CD4-positive, alpha-beta memory T cell (primary cell): ENCODE measurements at regions of chr12 and their contacts with region 1.

Region 1: GRCh38 chr12:26884765-26885576 is 52.0 kb upstream of the ITPR2 start:
- DNase-seq: peak; percentile 77 to 82 (median 82)
- H3K4me3 ChIP-seq: no peak overlapping the region
- H3K4me3 Mint-ChIP-seq: peak overlapping the region; percentile 40 to 80 (median 67)
- H3K27ac ChIP-seq: no peak overlapping the region
- H3K27ac Mint-ChIP-seq: peak overlapping the region in 3 of 7 donors; percentile 42 to 60 (median 53)
- H3K4me1 ChIP-seq: peaks cover 4% of the 10 kb centered on the region
- H3K4me1 Mint-ChIP-seq: peaks cover 5 to 8% (median 7%) of the 10 kb centered on the region in 4 donors
- H3K27me3 ChIP-seq: no peaks in the 10 kb centered on the region
- H3K27me3 Mint-ChIP-seq: peaks cover 2 to 3% of the 10 kb centered on the region in 2 donors

Region 2: GRCh38 chr12:26097046-26097878 is 787.7 kb before region 1 on chr12:
- CTCF ChIA-PET with region 1: interaction called, 3 read pairs
- POLR2A ChIA-PET with region 1: no interaction called
- intact Hi-C with region 1: loop called (anchors 1 kb)
- DNase-seq: peak; percentile 48 to 54 (median 49)
- H3K4me3 ChIP-seq: no peak overlapping the region
- H3K4me3 Mint-ChIP-seq: no peak overlapping the region
- H3K27ac ChIP-seq: no peak overlapping the region
- H3K27ac Mint-ChIP-seq: no peak overlapping the region
- H3K4me1 ChIP-seq: no peaks in the 10 kb centered on the region
- H3K4me1 Mint-ChIP-seq: peaks cover 0 to 1% (median 0%) of the 10 kb centered on the region in 4 donors
- H3K27me3 ChIP-seq: no peaks in the 10 kb centered on the region
- H3K27me3 Mint-ChIP-seq: peaks cover 7 to 9% of the 10 kb centered on the region in 2 donors

Region 3: DNA sequence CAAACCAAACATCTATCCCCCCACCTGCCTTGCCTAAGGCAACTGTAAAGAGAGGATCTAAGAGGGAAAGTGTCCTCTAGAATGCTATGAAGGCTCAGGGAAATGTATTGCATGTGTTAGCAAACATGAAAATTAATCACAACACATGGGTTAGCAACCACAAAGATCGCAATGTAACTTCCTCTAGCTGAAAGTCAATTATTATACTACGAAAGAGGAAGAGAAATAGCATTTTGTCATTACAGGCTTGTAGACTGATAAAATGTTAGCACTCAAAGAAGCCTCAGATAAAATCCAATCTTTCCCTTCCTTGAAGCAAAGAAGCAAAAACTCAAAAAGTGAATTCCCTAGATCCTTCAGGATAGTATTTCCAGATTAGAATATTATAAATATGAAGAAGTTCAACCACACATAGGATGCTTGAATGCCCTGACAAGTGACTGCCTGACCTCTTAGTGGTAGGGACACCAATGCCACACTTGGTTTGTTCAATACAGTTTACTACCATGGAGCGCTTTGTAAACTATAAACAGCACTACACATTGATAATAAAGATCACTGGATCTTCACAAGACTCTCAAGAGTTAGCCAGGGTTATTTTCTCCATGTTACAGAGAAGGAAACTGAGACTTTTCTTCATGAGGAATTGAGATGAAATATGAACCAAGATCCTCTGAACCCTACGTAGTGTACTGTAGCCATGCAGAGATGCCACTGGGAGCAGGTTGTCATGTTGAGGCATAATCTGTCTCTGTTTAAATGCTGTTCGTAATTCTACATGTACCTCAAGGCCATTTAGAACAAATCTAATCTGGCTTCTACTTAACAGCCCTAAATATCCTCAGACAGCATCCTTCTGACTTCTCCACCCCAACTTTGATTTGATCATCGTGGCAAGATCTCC is 152.7 kb before region 1 on chr12:
- CTCF ChIA-PET with region 1: no interaction called
- POLR2A ChIA-PET with region 1: no interaction called
- intact Hi-C with region 1: no loop called
- DNase-seq: no peak
- H3K4me3 ChIP-seq: no peak overlapping the region
- H3K4me3 Mint-ChIP-seq: no peak overlapping the region
- H3K27ac ChIP-seq: no peak overlapping the region
- H3K27ac Mint-ChIP-seq: no peak overlapping the region
- H3K4me1 ChIP-seq: peaks cover 10% of the 10 kb centered on the region
- H3K4me1 Mint-ChIP-seq: peaks cover 33 to 50% (median 41%) of the 10 kb centered on the region in 4 donors
- H3K27me3 ChIP-seq: no peaks in the 10 kb centered on the region
- H3K27me3 Mint-ChIP-seq: no peaks in the 10 kb centered on the region

Region 4: DNA sequence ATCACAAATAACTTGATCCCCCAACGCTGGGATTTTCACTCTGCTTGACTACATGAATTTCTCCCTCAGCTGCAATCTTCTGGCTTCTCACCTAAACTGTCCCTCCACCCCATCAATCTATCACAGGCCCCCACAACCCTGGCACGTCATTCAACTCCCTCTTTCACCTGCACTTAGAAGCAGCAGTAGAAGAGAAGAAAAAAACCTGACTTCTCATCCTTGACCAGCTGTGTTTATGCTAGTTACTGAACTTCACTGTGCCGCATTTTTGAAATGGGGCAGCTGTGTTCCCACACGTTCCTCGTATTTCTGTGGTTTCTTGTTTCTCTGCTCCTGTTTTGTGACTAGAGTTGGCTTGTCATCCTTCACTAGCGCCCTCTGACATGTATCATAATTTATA is 86.9 kb before region 1 on chr12:
- CTCF ChIA-PET with region 1: no interaction called
- POLR2A ChIA-PET with region 1: no interaction called
- intact Hi-C with region 1: no loop called
- DNase-seq: no peak
- H3K4me3 ChIP-seq: no peak overlapping the region
- H3K4me3 Mint-ChIP-seq: peak overlapping the region in 1 of 8 donors; percentile 16
- H3K27ac ChIP-seq: no peak overlapping the region
- H3K27ac Mint-ChIP-seq: peak overlapping the region in 2 of 7 donors; percentile 5 to 14
- H3K4me1 ChIP-seq: peaks cover 4% of the 10 kb centered on the region
- H3K4me1 Mint-ChIP-seq: peaks cover 4 to 18% (median 8%) of the 10 kb centered on the region in 4 donors
- H3K27me3 ChIP-seq: no peaks in the 10 kb centered on the region
- H3K27me3 Mint-ChIP-seq: no peaks in the 10 kb centered on the region

Region 5: GRCh38 chr12:26853303-26854030 is 31.5 kb before region 1 on chr12:
- CTCF ChIA-PET with region 1: interaction called, 13 read pairs
- POLR2A ChIA-PET with region 1: no interaction called
- intact Hi-C with region 1: loop called (anchors 1 kb)
- DNase-seq: peak; percentile 59 to 69 (median 67)
- H3K4me3 ChIP-seq: no peak overlapping the region
- H3K4me3 Mint-ChIP-seq: no peak overlapping the region
- H3K27ac ChIP-seq: no peak overlapping the region
- H3K27ac Mint-ChIP-seq: peak overlapping the region in 2 of 7 donors; percentile 10 to 14
- H3K4me1 ChIP-seq: peaks cover 4% of the 10 kb centered on the region
- H3K4me1 Mint-ChIP-seq: no peaks in the 10 kb centered on the region
- H3K27me3 ChIP-seq: no peaks in the 10 kb centered on the region
- H3K27me3 Mint-ChIP-seq: peaks cover 3 to 6% of the 10 kb centered on the region in 2 donors

Region 6: DNA sequence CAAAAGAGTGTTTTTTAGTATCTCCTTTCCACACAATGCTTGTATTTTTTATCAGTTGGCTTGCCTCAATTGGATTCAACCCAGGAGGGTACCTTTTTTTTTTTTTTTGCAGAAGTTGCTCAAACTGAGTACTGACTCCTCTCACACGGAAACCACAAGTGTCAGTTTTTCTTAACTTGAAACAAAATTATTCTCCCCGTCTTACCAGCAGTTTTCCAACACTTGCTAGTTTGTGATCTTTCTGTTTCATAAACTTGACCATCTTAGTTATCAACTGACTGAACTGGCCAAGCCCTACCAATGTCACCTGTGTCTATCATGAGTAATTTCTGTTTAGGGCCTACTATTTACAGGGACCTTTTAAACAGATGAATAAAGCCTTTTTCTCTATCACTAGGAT is 17.9 kb before region 1 on chr12:
- CTCF ChIA-PET with region 1: interaction called, 10 read pairs
- POLR2A ChIA-PET with region 1: no interaction called
- intact Hi-C with region 1: no loop called
- DNase-seq: no peak
- H3K4me3 ChIP-seq: no peak overlapping the region
- H3K4me3 Mint-ChIP-seq: peak overlapping the region in 2 of 8 donors; percentile 8 to 63
- H3K27ac ChIP-seq: no peak overlapping the region
- H3K27ac Mint-ChIP-seq: peak overlapping the region in 1 of 7 donors; percentile 38
- H3K4me1 ChIP-seq: peaks cover 5% of the 10 kb centered on the region
- H3K4me1 Mint-ChIP-seq: peaks cover 6 to 16% (median 11%) of the 10 kb centered on the region in 4 donors
- H3K27me3 ChIP-seq: no peaks in the 10 kb centered on the region
- H3K27me3 Mint-ChIP-seq: peaks cover 0 to 7% of the 10 kb centered on the region in 2 donors

Region 7: GRCh38 chr12:26874501-26875296 is 10.3 kb before region 1 on chr12:
- CTCF ChIA-PET with region 1: interaction called, 28 read pairs
- POLR2A ChIA-PET with region 1: interaction called, 4 read pairs
- intact Hi-C with region 1: no loop called
- DNase-seq: no peak
- H3K4me3 ChIP-seq: no peak overlapping the region
- H3K4me3 Mint-ChIP-seq: no peak overlapping the region
- H3K27ac ChIP-seq: no peak overlapping the region
- H3K27ac Mint-ChIP-seq: no peak overlapping the region
- H3K4me1 ChIP-seq: no peaks in the 10 kb centered on the region
- H3K4me1 Mint-ChIP-seq: peaks cover 0 to 4% (median 0%) of the 10 kb centered on the region in 4 donors
- H3K27me3 ChIP-seq: no peaks in the 10 kb centered on the region
- H3K27me3 Mint-ChIP-seq: peaks cover 0 to 4% of the 10 kb centered on the region in 2 donors

Region 8: DNA sequence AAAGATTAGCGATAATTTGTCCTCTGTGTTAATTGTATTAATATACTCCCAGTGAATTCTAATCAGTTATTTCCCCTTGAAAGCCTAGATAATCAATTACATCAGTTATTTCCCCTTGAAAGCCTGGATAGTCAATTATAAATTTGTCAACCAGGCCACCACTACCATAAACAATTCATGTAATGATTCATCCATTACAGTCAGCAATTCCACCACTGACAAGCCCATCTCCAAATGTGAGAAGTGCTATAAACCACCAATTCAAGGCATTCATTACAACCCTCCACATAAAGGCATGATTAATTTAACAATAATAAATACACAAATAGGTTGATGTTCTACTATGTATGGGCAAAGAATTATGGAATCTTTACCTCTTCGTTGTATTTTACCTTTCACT is 11.9 kb after region 1 on chr12:
- CTCF ChIA-PET with region 1: interaction called, 27 read pairs
- POLR2A ChIA-PET with region 1: no interaction called
- intact Hi-C with region 1: no loop called
- DNase-seq: no peak
- H3K4me3 ChIP-seq: no peak overlapping the region
- H3K4me3 Mint-ChIP-seq: peak overlapping the region in 1 of 8 donors; percentile 42
- H3K27ac ChIP-seq: no peak overlapping the region
- H3K27ac Mint-ChIP-seq: peak overlapping the region in 1 of 7 donors; percentile 42
- H3K4me1 ChIP-seq: no peaks in the 10 kb centered on the region
- H3K4me1 Mint-ChIP-seq: peaks cover 0 to 9% (median 0%) of the 10 kb centered on the region in 4 donors
- H3K27me3 ChIP-seq: no peaks in the 10 kb centered on the region
- H3K27me3 Mint-ChIP-seq: no peaks in the 10 kb centered on the region